ENCODE measurements at regions of chr6 and their contacts with region 1.

Region 1: DNA sequence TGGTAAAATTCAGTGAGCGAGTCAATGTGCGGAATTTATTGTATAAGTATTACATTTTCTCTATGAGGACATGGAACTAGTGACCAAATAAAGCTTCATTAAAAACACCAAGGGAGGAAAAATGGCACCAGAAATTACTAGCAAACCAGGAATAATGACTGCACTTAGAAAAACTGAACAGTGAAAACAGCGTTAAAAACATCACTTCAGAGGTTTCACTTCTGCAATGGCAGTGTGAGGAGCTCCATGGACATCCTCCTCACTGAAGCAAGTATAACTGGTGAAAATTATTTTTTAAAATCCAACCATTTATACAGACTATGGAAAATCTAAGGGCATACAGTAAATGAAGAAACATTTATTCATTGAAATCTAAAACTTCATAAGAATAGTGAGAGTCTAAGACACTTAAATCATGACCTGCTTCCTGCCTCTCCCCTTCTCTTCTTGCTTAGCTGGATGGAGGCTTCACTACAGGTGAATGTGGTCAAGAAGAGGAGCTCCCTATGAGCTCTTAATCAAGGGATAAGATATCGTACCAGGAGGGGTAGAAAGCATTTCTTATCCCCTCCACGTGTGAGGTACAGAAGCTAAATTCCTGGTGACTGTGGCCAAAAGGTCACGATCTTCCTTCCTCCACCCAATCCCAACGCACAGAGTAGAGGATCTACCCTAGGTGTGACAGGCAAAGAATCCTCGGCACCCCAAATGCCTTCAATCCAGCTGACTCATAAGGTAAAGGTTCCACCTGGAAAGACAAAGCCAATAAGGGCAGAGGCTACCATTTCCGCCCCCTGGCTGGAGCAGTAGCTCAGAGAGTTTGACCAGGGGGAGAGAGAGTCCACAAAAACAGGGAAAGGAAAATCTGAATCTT is 12.3 kb upstream of the ASF1A start:
- DNase-seq: no peak
- ATAC-seq: peak; percentile 90
- H3K4me3 ChIP-seq: no peak overlapping the region
- H3K27ac ChIP-seq: peak overlapping the region; percentile 38; the same call in 1 of the 2 replicates
- H3K4me1 ChIP-seq: peaks cover 21% of the 10 kb centered on the region
- H3K27me3 ChIP-seq: no peaks in the 10 kb centered on the region
- CTCF ChIP-seq: no peak
- EP300 ChIP-seq: peak in 1 of 2 experiments; percentile 55; a peak in 2 of 4 replicates
- POLR2A ChIP-seq: no peak
- RAD21 ChIP-seq: no peak

Region 2: DNA sequence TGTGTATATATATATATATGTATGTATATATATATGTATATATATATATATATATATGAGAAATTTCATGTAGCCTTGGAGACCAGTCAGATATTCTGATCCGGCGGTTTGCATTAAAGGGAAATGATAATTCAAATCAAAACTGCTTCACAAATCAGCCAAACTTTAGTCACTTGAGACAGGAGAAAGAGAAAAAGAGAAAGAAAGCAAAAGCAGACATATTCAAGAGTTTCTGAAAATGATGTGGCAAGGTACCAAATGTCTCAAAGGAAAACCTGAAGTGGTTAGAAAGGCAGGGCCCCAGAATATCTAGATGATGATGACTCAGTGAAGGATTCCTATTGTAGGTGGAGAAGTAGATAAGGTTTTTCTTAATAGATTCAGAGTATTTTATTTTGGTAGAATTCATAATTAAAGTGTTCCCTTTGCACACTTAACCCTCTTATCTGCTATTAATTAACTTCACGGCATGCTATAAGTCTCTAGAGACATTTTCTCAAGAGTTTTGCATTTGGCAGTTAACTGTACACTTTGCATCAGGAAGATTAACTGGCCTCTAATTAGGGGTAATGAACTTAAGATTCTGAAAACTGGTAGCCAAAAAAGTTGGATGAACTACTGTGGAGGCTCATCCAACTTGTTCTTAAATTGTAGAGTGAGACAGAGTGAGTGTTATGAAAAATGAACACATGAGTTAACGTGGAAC is 37.8 kb before region 1 on chr6:
- CTCF ChIA-PET with region 1: interaction called, 3 read pairs
- POLR2A ChIA-PET with region 1: interaction called, 3 read pairs
- RAD21 ChIA-PET with region 1: no interaction called
- SMC1A ChIA-PET with region 1: interaction called, 10 read pairs
- in situ Hi-C with region 1: no loop called
- intact Hi-C with region 1: no loop called
- DNase-seq: peak; percentile 69
- ATAC-seq: peak; percentile 96
- H3K4me3 ChIP-seq: no peak overlapping the region; the same call in 1 of the 2 replicates
- H3K27ac ChIP-seq: peak overlapping the region; percentile 23
- H3K4me1 ChIP-seq: peaks cover 15% of the 10 kb centered on the region
- H3K27me3 ChIP-seq: no peaks in the 10 kb centered on the region
- CTCF ChIP-seq: no peak
- EP300 ChIP-seq: 0 out of 4 replicates have a peak, but pooled peaks have one; percentile 16 to 53
- POLR2A ChIP-seq: no peak
- RAD21 ChIP-seq: no peak

Region 3: GRCh38 chr6:118864341-118865099 is 17.2 kb before region 1 on chr6:
- CTCF ChIA-PET with region 1: interaction called, 6 read pairs
- POLR2A ChIA-PET with region 1: interaction called, 10 read pairs
- RAD21 ChIA-PET with region 1: no interaction called
- SMC1A ChIA-PET with region 1: interaction called, 12 read pairs
- in situ Hi-C with region 1: no loop called
- intact Hi-C with region 1: no loop called
- DNase-seq: no peak
- ATAC-seq: peak; percentile 51
- H3K4me3 ChIP-seq: peak overlapping the region; percentile 36; the same call in 1 of the 2 replicates
- H3K27ac ChIP-seq: 0 out of 2 replicates have a peak overlapping the region, but pooled peaks have one; percentile 9
- H3K4me1 ChIP-seq: no peaks in the 10 kb centered on the region
- H3K27me3 ChIP-seq: no peaks in the 10 kb centered on the region
- CTCF ChIP-seq: no peak
- EP300 ChIP-seq: no peak
- POLR2A ChIP-seq: no peak
- RAD21 ChIP-seq: no peak

Region 4: DNA sequence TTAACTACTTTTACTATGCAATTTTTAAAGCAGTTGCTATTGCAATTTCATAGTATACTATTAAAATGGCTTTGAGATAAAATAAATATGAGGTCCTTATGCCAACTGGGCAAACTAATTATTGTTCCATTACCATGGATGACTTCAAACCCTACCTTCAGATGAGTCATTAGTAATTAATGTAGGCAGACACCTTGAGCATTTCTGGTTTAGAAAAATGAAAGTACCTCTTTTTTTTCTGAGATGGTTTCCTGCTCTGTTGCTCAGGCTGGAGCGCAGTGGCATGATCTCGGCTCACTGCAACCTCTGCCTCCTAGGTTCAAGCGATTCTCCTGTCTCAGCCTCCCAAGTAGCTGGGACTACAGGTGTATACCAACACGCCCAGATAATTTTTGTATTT is 24.2 kb after region 1 on chr6:
- CTCF ChIA-PET with region 1: no interaction called
- POLR2A ChIA-PET with region 1: no interaction called
- RAD21 ChIA-PET with region 1: no interaction called
- SMC1A ChIA-PET with region 1: no interaction called
- in situ Hi-C with region 1: no loop called
- intact Hi-C with region 1: no loop called
- DNase-seq: no peak
- ATAC-seq: no peak
- H3K4me3 ChIP-seq: no peak overlapping the region
- H3K27ac ChIP-seq: no peak overlapping the region
- H3K4me1 ChIP-seq: no peaks in the 10 kb centered on the region
- H3K27me3 ChIP-seq: no peaks in the 10 kb centered on the region
- CTCF ChIP-seq: no peak
- EP300 ChIP-seq: no peak
- POLR2A ChIP-seq: no peak
- RAD21 ChIP-seq: no peak

Measured in GM12878 (cell line).